ENCODE measurements at regions of chr14 and their contacts with region 1.

Region 1: DNA sequence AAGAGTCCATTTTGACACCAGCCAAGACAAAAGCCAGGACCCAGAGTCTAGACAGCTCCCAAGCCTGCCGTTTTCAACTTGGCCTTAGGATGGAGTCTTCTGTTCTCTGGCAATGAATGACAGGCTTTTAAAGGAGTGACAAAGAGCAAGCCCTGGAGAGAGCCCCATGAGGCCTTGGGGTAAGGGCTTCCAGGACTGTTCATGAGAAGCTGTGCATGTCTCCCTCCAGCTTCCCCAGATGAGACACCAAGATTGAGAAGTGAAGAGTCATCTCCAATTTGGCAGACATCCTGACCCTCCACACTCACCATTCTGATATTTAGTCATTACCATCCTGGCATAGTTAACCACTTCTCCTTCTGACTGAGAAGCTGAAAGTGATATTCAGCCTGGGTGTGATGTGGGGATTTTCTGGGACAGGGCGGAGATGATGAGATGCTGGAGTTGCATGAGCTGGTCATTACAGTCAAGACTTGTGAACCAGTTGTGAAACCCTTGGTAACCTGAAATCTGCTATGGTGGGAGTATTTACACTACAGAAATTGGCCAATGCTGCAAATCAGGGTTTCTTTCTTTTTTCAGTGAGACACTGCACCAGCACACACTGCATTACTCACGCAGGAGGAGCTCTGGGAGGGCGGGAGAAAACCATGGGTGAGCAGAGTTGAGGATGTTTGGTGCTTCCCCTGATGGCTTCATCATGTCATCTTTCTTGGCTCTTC is 77.8 kb downstream of the VCPKMT start:
- DNase-seq: peak; percentile 100
- ATAC-seq: peak; percentile 87
- H3K4me3 ChIP-seq: peak overlapping the region; percentile 1; the same call in 1 of the 2 replicates
- H3K27ac ChIP-seq: peak overlapping the region; percentile 96
- H3K4me1 ChIP-seq: peaks cover 49% of the 10 kb centered on the region
- H3K27me3 ChIP-seq: no peaks in the 10 kb centered on the region
- CTCF ChIP-seq: 0 out of 6 replicates have a peak, but pooled peaks of 2 of the 3 experiments have one; percentile 10
- EP300 ChIP-seq: peak; percentile 91 to 99
- POLR2A ChIP-seq: peak; percentile 56
- RAD21 ChIP-seq: peak; percentile 35

Region 2: DNA sequence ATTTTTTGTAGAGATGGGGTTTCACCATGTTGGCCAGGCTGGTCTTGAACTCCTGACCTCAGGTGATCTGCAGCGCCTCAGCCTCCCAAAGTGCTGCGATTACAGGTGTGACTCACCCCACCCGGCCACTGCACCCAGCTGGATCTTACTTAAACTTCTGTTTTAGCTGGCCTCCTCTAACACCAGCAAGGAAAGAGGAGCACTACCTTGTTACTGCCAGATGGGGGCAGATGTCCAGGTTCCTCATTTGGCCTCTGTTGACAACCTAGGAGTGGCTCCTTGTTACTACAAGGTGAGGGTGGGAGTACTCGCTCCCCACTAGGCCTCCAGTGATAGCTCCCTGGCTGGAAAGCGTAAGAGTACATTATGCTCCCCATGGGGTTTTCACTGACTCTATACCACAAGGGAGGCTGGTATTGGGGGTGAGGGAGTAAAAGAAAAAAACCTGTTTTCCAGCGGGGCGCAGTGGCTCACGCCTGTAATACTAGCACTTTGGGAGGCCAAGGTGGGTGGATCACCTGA is 158.8 kb before region 1 on chr14:
- CTCF ChIA-PET with region 1: interaction called, 5 read pairs
- POLR2A ChIA-PET with region 1: interaction called, 5 read pairs
- RAD21 ChIA-PET with region 1: interaction called, 12 read pairs
- SMC1A ChIA-PET with region 1: interaction called, 10 read pairs
- in situ Hi-C with region 1: no loop called
- intact Hi-C with region 1: no loop called
- DNase-seq: no peak
- ATAC-seq: peak; percentile 98
- H3K4me3 ChIP-seq: no peak overlapping the region
- H3K27ac ChIP-seq: no peak overlapping the region
- H3K4me1 ChIP-seq: no peaks in the 10 kb centered on the region
- H3K27me3 ChIP-seq: no peaks in the 10 kb centered on the region
- CTCF ChIP-seq: peak; percentile 50 to 74 (median 72)
- EP300 ChIP-seq: no peak
- POLR2A ChIP-seq: no peak
- RAD21 ChIP-seq: peak; percentile 72

Region 3: GRCh38 chr14:49971156-49972130 is 67.1 kb before region 1 on chr14:
- CTCF ChIA-PET with region 1: interaction called, 16 read pairs
- POLR2A ChIA-PET with region 1: interaction called, 5 read pairs
- RAD21 ChIA-PET with region 1: interaction called, 26 read pairs
- SMC1A ChIA-PET with region 1: interaction called, 14 read pairs
- in situ Hi-C with region 1: no loop called
- intact Hi-C with region 1: loop called (anchors 2 kb)
- DNase-seq: peak; percentile 89
- ATAC-seq: peak; percentile 90
- H3K4me3 ChIP-seq: peak overlapping the region; percentile 49
- H3K27ac ChIP-seq: peak overlapping the region; percentile 100
- H3K4me1 ChIP-seq: peaks cover 39% of the 10 kb centered on the region
- H3K27me3 ChIP-seq: no peaks in the 10 kb centered on the region
- CTCF ChIP-seq: no peak
- EP300 ChIP-seq: peak; percentile 90 to 95
- POLR2A ChIP-seq: peak; percentile 24; the same call in 1 of the 2 replicates
- RAD21 ChIP-seq: no peak

Region 4: DNA sequence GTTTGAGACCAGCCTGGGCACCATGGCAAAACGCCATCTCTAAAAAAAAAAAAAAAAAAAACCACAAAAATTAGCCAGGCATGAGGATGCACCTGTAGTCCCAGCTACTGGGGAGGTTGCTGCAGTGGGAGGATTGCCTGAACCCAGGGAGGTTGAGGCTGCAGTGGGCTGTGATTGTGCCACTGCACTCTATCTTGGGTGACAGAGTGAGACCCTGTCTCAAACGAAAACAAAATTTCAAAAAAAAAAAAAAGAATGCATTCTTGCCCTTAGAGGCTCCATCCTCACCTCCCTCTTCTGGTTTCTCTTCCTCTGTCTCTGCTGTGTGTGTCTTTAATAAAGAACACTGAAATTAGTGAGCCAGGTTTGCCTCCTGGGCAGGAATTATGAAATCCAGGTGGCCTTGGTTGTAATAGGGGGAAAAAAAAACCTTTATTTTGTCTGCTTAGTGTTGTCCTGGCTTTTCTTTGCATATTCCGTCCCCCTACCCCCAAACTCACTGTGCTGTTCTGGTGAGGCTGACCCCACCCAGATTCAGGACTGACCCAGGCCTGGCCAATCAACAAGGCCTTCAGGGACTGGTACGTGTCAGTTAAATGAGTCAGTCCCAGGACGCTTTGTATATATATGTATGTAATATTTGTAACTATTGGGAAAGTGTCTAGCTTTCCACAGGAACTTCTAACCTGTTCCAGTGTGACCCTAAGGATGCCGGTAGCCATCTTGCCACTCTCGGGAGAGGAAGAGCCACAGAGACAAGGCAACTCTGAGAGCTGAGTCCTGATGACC is 29.8 kb before region 1 on chr14:
- CTCF ChIA-PET with region 1: interaction called, 14 read pairs
- POLR2A ChIA-PET with region 1: interaction called, 40 read pairs
- RAD21 ChIA-PET with region 1: interaction called, 104 read pairs
- SMC1A ChIA-PET with region 1: interaction called, 40 read pairs
- in situ Hi-C with region 1: no loop called
- intact Hi-C with region 1: loop called (anchors 1 kb)
- DNase-seq: no peak
- ATAC-seq: peak; percentile 60
- H3K4me3 ChIP-seq: no peak overlapping the region
- H3K27ac ChIP-seq: no peak overlapping the region
- H3K4me1 ChIP-seq: peaks cover 14% of the 10 kb centered on the region
- H3K27me3 ChIP-seq: no peaks in the 10 kb centered on the region
- CTCF ChIP-seq: no peak
- EP300 ChIP-seq: no peak
- POLR2A ChIP-seq: no peak
- RAD21 ChIP-seq: no peak

Region 5: DNA sequence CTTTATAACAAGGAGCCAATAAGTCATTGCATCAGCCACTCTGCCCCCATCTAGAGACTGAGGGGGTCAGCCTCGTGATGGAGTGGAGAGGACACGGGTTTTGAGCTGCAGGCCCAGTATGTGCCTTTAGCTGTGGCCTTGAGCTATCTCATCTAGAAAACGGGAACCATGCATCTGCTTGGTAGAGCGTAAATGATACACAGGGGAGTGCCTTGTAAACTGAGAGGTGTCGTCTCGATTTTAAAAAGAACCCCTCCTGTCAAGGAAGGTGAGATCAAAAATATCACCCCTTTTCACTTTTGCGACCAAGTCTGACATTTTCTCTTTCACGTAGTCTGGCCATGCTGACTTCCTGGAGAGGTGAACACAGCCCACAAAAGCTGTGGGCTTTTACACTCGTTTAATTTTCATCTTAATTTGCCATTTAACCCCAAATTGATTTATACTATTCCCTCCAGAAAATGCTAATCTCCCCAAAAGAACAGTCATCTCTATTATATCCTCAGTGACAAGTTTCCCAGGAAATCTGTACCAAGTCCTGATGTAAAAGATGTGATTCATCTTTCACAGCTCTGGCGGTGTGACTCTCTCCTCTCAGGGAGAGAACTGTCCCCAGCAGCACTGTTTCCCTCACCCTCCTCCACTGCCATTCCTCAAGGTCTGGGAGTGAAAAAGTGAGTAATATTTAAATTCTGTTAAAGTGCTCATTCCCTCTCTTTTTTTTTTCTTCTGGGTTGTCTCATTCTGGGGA is 47.2 kb after region 1 on chr14:
- CTCF ChIA-PET with region 1: interaction called, 26 read pairs
- POLR2A ChIA-PET with region 1: interaction called, 16 read pairs
- RAD21 ChIA-PET with region 1: interaction called, 73 read pairs
- SMC1A ChIA-PET with region 1: interaction called, 69 read pairs
- in situ Hi-C with region 1: no loop called
- intact Hi-C with region 1: loop called (anchors 1 kb)
- DNase-seq: peak; percentile 95
- ATAC-seq: peak; percentile 73
- H3K4me3 ChIP-seq: peak overlapping the region; percentile 38; the same call in 1 of the 2 replicates
- H3K27ac ChIP-seq: peak overlapping the region; percentile 95
- H3K4me1 ChIP-seq: peaks cover 68% of the 10 kb centered on the region
- H3K27me3 ChIP-seq: no peaks in the 10 kb centered on the region
- CTCF ChIP-seq: no peak
- EP300 ChIP-seq: peak; percentile 85 to 91
- POLR2A ChIP-seq: peak; percentile 48; the same call in 1 of the 2 replicates
- RAD21 ChIP-seq: no peak

Region 6: GRCh38 chr14:50139192-50139591 is 100.6 kb after region 1 on chr14:
- CTCF ChIA-PET with region 1: no interaction called
- POLR2A ChIA-PET with region 1: no interaction called
- RAD21 ChIA-PET with region 1: no interaction called
- SMC1A ChIA-PET with region 1: no interaction called
- in situ Hi-C with region 1: no loop called
- intact Hi-C with region 1: no loop called
- DNase-seq: no peak
- ATAC-seq: no peak
- H3K4me3 ChIP-seq: no peak overlapping the region
- H3K27ac ChIP-seq: no peak overlapping the region
- H3K4me1 ChIP-seq: no peaks in the 10 kb centered on the region
- H3K27me3 ChIP-seq: no peaks in the 10 kb centered on the region
- CTCF ChIP-seq: no peak
- EP300 ChIP-seq: no peak
- POLR2A ChIP-seq: no peak
- RAD21 ChIP-seq: no peak

Region 7: GRCh38 chr14:51004801-51005526 is 966.4 kb after region 1 on chr14:
- CTCF ChIA-PET with region 1: no interaction called
- POLR2A ChIA-PET with region 1: no interaction called
- RAD21 ChIA-PET with region 1: no interaction called
- SMC1A ChIA-PET with region 1: no interaction called
- in situ Hi-C with region 1: no loop called
- intact Hi-C with region 1: no loop called
- DNase-seq: no peak
- ATAC-seq: peak; percentile 58
- H3K4me3 ChIP-seq: no peak overlapping the region
- H3K27ac ChIP-seq: no peak overlapping the region
- H3K4me1 ChIP-seq: no peaks in the 10 kb centered on the region
- H3K27me3 ChIP-seq: no peaks in the 10 kb centered on the region
- CTCF ChIP-seq: no peak
- EP300 ChIP-seq: no peak
- POLR2A ChIP-seq: no peak
- RAD21 ChIP-seq: no peak